ENCODE measurements at regions of chr6 and their contacts with region 1.

Region 1: DNA sequence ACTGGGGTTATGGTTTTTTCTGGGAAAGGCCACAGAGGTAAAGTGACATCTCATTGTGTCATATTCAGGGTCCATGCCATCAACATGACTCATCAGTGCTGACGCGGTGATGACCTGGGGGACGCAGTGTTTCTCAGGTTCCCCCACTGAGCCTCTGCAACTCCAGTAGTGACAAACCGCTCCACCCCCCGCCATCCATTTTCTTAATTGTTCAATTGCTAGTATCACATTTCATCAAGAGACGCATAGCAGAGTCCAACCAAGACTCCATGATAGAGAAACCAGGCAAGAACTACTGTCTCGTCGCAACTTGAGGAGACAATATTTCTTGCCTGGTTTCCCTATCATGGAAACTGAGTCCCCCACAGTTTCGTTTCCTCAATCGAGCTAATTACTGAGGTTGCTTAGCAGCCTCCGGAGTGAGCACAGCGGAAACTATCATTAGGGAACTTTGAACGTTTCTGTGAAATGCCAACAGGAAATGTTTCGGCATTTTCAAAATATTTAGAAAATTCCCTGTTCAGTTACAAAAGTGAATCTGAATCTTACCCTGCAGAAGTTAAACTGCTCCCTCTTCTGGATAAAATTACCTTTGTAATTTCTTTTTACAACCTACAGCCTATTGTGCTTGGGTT is 12.2 kb upstream of the SERPINB1 start:
- DNase-seq: peak; percentile 85
- ATAC-seq: peak; percentile 39
- H3K4me3 ChIP-seq: peak overlapping the region in 3 of 5 experiments; percentile 31 to 52 (median 31)
- H3K4me3 Mint-ChIP-seq: peak overlapping the region; percentile 74
- H3K27ac ChIP-seq: peak overlapping the region; percentile 73 to 84
- H3K27ac Mint-ChIP-seq: peak overlapping the region; percentile 98
- H3K4me1 ChIP-seq: peaks cover 54 to 62% of the 10 kb centered on the region in 2 donors
- H3K4me1 Mint-ChIP-seq: peaks cover 68% of the 10 kb centered on the region
- H3K27me3 ChIP-seq: no peaks in the 10 kb centered on the region
- H3K27me3 Mint-ChIP-seq: no peaks in the 10 kb centered on the region
- CTCF ChIP-seq: peak; percentile 69

Region 2: DNA sequence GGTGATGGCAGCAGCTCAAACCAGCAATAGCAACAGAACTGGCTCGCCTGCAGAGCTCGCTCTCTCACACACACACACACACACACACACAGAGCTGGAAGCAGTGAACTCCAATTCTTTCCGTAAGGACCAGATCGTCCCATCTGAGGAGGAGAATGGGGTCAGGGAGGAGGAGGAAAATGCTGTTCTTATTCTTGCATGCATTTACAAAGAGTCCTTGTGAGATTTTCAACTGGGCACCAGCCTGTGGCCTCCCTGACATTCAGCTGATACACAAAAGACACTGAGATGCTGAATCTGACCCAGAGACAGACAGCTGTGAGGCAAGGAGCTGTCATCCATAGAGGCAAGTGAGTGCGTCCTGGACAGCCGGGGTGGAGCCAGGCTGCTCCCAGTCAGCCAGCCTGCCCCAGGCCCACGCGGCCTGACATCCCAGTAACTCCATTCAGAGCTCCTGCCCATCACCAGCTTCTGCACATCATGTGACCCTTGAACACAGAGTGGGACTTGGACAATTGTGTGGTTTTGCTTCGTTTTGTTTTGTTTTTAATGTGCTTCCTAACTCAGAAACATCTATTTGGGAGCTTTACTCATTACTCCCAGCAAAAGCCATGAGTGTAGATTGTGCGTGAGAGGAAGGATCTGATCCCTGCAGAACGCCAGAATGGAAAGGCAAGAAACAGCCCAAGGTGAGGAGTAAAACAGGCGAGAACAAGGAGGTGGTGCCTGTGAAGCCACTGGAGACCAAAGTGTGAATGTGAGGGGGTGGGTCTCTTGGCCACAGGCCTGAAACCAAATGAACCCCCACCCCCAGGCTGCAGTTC is 47.2 kb after region 1 on chr6:
- CTCF ChIA-PET with region 1: interaction called, 73 read pairs
- POLR2A ChIA-PET with region 1: interaction called, 12 read pairs
- intact Hi-C with region 1: no loop called
- DNase-seq: no peak
- ATAC-seq: no peak
- H3K4me3 ChIP-seq: peak overlapping the region in 4 of 5 experiments; percentile 10 to 95 (median 90)
- H3K4me3 Mint-ChIP-seq: peak overlapping the region; percentile 100
- H3K27ac ChIP-seq: peak overlapping the region; percentile 31 to 91
- H3K27ac Mint-ChIP-seq: peak overlapping the region; percentile 97
- H3K4me1 ChIP-seq: peaks cover 45 to 48% of the 10 kb centered on the region in 2 donors
- H3K4me1 Mint-ChIP-seq: peaks cover 56% of the 10 kb centered on the region
- H3K27me3 ChIP-seq: no peaks in the 10 kb centered on the region
- H3K27me3 Mint-ChIP-seq: no peaks in the 10 kb centered on the region
- CTCF ChIP-seq: no peak

Region 3: DNA sequence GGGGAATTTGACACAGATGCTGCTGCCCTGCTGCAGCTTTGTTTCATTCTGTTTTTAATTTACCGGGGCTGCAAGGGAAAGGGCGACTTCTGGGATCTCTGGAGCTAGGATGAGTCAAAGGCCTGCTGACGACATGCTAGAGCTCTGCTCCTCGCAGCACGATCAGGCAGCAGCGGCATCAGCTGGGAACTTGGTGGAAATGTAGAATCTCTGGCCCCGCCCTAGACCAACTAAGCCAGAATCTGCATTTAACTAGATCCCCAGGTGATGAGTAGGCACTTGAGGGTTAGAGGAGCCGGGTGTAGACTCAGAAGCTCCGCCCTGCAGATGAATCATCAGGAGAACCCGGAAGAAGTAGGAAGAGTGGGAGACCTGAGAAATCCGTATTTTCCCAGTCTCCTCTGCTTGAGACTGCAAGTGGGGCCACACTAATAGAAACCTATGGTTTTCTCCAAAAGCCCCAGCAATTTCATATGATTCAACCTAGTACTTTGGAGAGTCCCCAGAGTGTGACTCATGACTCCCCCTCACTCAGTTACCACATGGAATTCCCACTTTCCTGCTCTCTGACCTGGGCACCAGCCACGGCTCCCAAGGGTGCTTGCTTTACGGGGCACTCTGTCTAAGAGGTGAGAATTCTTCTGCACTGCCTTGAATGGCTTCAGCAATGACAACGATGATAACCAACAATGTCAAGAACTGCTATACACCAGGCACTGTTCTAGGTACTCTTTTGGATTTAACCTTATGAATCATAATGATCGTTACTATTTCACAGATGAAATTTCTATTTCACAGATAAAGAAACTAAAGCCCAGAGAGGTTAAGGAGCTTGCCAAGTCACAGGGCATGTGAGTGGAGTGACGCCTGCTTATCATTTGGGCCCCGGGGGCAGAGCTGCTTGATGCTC is 355.5 kb after region 1 on chr6:
- CTCF ChIA-PET with region 1: no interaction called
- POLR2A ChIA-PET with region 1: no interaction called
- intact Hi-C with region 1: no loop called
- DNase-seq: peak; percentile 14
- ATAC-seq: peak; percentile 17
- H3K4me3 ChIP-seq: no peak overlapping the region
- H3K4me3 Mint-ChIP-seq: peak overlapping the region; percentile 4
- H3K27ac ChIP-seq: no peak overlapping the region
- H3K27ac Mint-ChIP-seq: no peak overlapping the region
- H3K4me1 ChIP-seq: peaks cover 4 to 11% of the 10 kb centered on the region in 2 donors
- H3K4me1 Mint-ChIP-seq: peaks cover 17% of the 10 kb centered on the region
- H3K27me3 ChIP-seq: no peaks in the 10 kb centered on the region
- H3K27me3 Mint-ChIP-seq: peaks cover 30% of the 10 kb centered on the region
- CTCF ChIP-seq: no peak

Measured in B cell (primary cell).